HEK293 (cell line): ENCODE measurements at regions of chr2 and their contacts with region 1.

Region 1: GRCh38 chr2:240861554-240861953 is 7.1 kb upstream of the AGXT start:
- H3K4me3 ChIP-seq: no peak overlapping the region
- H3K27ac ChIP-seq: no peak overlapping the region
- H3K4me1 ChIP-seq: no peaks in the 10 kb centered on the region
- CTCF ChIP-seq: no peak

Region 2: GRCh38 chr2:240851078-240851991 is 10.2 kb before region 1 on chr2:
- CTCF ChIA-PET with region 1: interaction called, 18 read pairs
- POLR2A ChIA-PET with region 1: no interaction called
- H3K4me3 ChIP-seq: no peak overlapping the region
- H3K27ac ChIP-seq: no peak overlapping the region
- H3K4me1 ChIP-seq: no peaks in the 10 kb centered on the region
- CTCF ChIP-seq: peak; percentile 94